Caco-2 (cell line): ENCODE measurements at regions of chrX and their contacts with region 1.

Region 1: GRCh38 chrX:100685284-100685996 is 41.4 kb downstream of the SRPX2 start:
- DNase-seq: peak; percentile 56 to 75
- H3K4me3 ChIP-seq: no peak overlapping the region
- H3K4me3 Mint-ChIP-seq: no peak overlapping the region
- H3K27ac Mint-ChIP-seq: no peak overlapping the region
- H3K4me1 ChIP-seq: no peaks in the 10 kb centered on the region
- H3K4me1 Mint-ChIP-seq: no peaks in the 10 kb centered on the region
- H3K27me3 ChIP-seq: no peaks in the 10 kb centered on the region
- H3K27me3 Mint-ChIP-seq: no peaks in the 10 kb centered on the region
- CTCF ChIP-seq: peak; percentile 83 to 87

Region 2: GRCh38 chrX:100512471-100512870 is 173.0 kb before region 1 on chrX:
- CTCF ChIA-PET with region 1: no interaction called
- POLR2A ChIA-PET with region 1: no interaction called
- intact Hi-C with region 1: loop called (anchors 2 kb)
- DNase-seq: peak in 1 of 2 experiments; percentile 6
- H3K4me3 ChIP-seq: no peak overlapping the region
- H3K4me3 Mint-ChIP-seq: no peak overlapping the region
- H3K27ac Mint-ChIP-seq: no peak overlapping the region
- H3K4me1 ChIP-seq: no peaks in the 10 kb centered on the region
- H3K4me1 Mint-ChIP-seq: no peaks in the 10 kb centered on the region
- H3K27me3 ChIP-seq: no peaks in the 10 kb centered on the region
- H3K27me3 Mint-ChIP-seq: peaks cover 6% of the 10 kb centered on the region
- CTCF ChIP-seq: peak; percentile 41

Region 3: DNA sequence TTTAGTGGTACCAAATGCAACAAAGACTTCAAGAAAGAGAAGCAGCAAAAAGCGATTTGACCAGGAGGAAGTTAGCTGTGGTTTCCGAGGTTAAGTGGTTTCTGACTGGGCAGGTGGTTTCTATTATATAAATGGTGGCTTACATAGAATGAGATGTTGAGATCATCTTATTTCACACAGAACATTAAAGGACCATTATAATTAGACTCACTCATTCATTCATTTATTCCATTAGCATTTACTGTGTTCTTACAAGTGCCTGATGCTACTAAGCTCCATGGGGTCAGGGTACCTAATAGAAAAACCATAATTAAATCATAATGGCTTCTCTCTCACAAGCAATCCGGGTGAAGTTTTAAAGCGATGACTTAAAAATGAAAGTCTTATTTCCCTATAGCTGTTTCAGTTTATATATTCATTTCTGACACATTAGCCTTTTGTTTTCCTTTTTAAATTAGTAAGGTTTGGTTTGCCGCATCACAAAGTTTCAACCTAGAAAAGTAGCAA is 59.4 kb before region 1 on chrX:
- CTCF ChIA-PET with region 1: no interaction called
- POLR2A ChIA-PET with region 1: no interaction called
- intact Hi-C with region 1: no loop called
- DNase-seq: no peak
- H3K4me3 ChIP-seq: no peak overlapping the region
- H3K4me3 Mint-ChIP-seq: no peak overlapping the region
- H3K27ac Mint-ChIP-seq: no peak overlapping the region
- H3K4me1 ChIP-seq: no peaks in the 10 kb centered on the region
- H3K4me1 Mint-ChIP-seq: no peaks in the 10 kb centered on the region
- H3K27me3 ChIP-seq: no peaks in the 10 kb centered on the region
- H3K27me3 Mint-ChIP-seq: no peaks in the 10 kb centered on the region
- CTCF ChIP-seq: no peak

Region 4: DNA sequence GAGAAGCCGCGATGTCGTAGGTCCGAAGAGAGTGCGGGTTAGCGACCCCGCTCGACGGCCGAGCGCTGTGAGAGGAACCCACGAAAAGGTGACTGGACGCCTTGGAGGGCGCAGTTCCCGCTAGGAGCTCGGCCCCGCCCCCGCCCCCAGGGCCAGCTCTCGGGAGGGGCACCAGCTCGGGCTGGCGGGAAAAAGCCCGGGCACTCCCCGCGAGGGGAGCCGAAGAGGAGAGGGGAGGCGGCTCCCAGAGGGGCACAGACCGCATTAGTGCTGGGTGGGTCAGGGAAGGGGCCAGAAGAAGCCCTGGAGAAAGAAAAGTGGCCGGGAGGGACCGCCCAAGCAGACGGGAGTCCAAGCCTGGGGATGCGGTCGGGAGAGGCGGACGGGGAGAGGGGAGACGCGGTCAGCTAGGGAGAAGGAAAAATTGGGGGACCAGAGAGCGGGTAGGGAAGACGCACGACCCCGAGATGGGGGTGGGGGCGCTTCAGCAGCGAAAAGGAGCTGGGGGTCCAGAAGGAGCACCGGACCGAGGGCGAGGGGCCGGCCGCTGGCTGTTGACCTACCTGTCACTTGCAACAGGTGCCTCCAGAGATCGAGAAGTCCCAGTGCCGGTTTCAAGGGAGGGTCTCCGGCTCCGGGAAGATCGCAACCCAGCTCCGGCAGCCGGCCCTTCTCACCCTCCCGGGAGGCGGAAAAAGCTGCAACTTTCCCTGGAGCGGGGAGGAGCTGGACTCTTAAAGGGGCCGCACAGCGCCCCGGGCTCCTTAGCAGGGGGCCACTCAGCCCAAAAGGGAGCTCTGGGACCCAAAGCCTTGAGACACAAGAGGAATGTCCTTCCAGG is 46.2 kb after region 1 on chrX and contains the start of gene SYTL4:
- CTCF ChIA-PET with region 1: no interaction called
- POLR2A ChIA-PET with region 1: no interaction called
- intact Hi-C with region 1: loop called (anchors 5 kb)
- DNase-seq: peak; percentile 12 to 23
- H3K4me3 ChIP-seq: peak within 1 kb of the TSS; percentile 53
- H3K4me3 Mint-ChIP-seq: peak within 1 kb of the TSS; percentile 87
- H3K27ac Mint-ChIP-seq: no peak within 1 kb of the TSS
- H3K4me1 ChIP-seq: no peaks in the 10 kb centered on the region
- H3K4me1 Mint-ChIP-seq: no peaks in the 10 kb centered on the region
- H3K27me3 ChIP-seq: no peaks in the 10 kb centered on the region
- H3K27me3 Mint-ChIP-seq: peaks cover 4% of the 10 kb centered on the region
- CTCF ChIP-seq: no peak
- total RNA-seq, gene SYTL4: 4.1 and 6.1 TPM in 2 replicates

Region 5: GRCh38 chrX:101206471-101206870 is 521.0 kb after region 1 on chrX:
- CTCF ChIA-PET with region 1: no interaction called
- POLR2A ChIA-PET with region 1: no interaction called
- intact Hi-C with region 1: loop called (anchors 1 kb)
- DNase-seq: peak in 1 of 2 experiments; percentile 29
- H3K4me3 ChIP-seq: no peak overlapping the region
- H3K4me3 Mint-ChIP-seq: no peak overlapping the region
- H3K27ac Mint-ChIP-seq: no peak overlapping the region
- H3K4me1 ChIP-seq: no peaks in the 10 kb centered on the region
- H3K4me1 Mint-ChIP-seq: peaks cover 7% of the 10 kb centered on the region
- H3K27me3 ChIP-seq: no peaks in the 10 kb centered on the region
- H3K27me3 Mint-ChIP-seq: no peaks in the 10 kb centered on the region
- CTCF ChIP-seq: peak; percentile 20 to 42